CD8-positive, alpha-beta T cell (primary cell): ENCODE measurements at regions of chr12 and their contacts with region 1.

Region 1: DNA sequence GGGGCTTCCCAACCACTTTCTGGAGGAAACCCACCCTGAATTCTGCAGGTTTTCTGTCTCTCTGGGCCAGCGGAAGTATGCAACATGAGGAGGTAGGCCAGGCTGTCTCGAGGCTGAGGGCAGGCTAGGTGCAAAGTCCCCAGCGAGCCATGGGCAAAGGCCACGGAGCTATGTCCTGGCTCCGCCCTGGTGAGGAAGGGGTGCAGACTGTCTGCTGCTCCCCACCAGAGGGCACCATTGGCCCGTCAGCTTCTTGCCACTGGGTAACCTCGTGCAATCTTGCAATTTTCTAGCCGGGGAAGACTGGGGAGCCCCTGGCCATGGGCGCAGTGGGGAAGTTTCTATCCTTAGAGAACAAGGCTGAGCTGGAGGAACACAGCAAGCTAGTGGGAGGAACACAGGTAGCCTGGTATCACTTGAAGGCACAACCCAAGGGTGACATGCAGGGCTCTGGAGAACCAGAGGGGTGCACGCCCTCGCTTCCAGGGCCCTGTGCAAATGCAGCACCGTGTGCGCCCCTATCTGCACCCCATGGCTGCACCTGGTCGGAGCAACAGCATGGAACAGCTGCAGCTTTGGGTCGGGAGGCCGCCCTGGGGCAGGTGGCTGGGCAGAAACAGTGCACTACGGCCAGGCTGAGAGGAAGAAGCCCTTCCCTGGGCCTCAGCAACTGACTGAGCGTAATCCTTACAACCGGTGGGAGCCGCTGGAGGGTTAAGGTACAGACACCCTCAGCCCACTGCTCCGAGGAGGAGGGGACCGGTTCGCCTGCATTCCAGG is 27.6 kb upstream of the RPLP0 start:
- DNase-seq: peak; percentile 73 to 92 (median 89)
- ATAC-seq: peak; percentile 73
- H3K4me3 ChIP-seq: peak overlapping the region; percentile 1 to 30
- H3K4me3 Mint-ChIP-seq: peak overlapping the region; percentile 47
- H3K27ac ChIP-seq: peak overlapping the region in 1 of 2 experiments; percentile 75
- H3K27ac Mint-ChIP-seq: peak overlapping the region; percentile 88
- H3K4me1 ChIP-seq: peaks cover 81% of the 10 kb centered on the region
- H3K4me1 Mint-ChIP-seq: peaks cover 82% of the 10 kb centered on the region
- H3K27me3 ChIP-seq: no peaks in the 10 kb centered on the region
- H3K27me3 Mint-ChIP-seq: no peaks in the 10 kb centered on the region
- CTCF ChIP-seq: peak; percentile 80

Region 2: DNA sequence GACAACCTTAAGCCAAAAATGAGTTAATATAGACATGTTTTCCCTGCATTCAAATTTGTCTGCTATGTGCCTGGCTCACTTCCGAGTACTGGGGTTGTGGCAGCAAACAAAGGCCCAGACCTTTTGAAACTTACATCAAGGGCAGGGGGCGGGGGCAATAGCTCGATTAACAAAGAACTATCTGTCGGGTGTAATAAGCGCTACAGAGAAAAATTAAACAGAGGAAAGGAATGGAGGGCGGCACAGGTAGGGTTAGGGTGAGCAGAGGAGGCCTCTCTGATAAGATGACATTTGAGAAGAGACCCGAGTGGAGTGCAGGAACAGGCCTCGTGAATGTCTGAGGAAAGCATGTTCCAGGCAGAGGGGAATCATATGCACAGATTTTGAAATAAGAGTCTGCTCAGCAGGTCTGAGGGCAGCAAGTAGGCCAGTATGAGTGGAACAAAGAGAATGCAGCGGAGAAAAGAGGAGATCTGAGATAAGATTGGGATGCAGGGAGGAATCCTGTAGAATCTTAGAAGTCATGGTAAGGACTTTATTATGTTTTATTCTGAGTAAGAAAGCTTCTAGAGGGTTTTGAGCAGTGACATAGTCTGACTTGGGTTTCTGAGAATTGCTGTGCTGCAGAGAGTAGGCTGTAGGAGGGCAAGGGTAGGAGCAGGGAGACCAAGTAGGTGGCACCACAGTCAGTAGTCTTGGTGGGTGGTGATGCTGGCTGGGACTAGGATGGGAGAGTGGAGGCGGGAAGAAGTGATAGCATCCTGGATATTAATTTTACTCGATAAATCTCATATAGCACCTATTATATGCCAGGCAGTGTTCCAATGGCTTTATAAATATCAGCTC is 186.9 kb before region 1 on chr12:
- CTCF ChIA-PET with region 1: no interaction called
- POLR2A ChIA-PET with region 1: no interaction called
- intact Hi-C with region 1: no loop called
- DNase-seq: peak in 8 of 9 experiments; percentile 4 to 72 (median 42)
- ATAC-seq: peak; percentile 87
- H3K4me3 ChIP-seq: no peak overlapping the region
- H3K4me3 Mint-ChIP-seq: peak overlapping the region; percentile 30
- H3K27ac ChIP-seq: peak overlapping the region in 1 of 2 experiments; percentile 4
- H3K27ac Mint-ChIP-seq: peak overlapping the region; percentile 93
- H3K4me1 ChIP-seq: no peaks in the 10 kb centered on the region
- H3K4me1 Mint-ChIP-seq: peaks cover 26% of the 10 kb centered on the region
- H3K27me3 ChIP-seq: no peaks in the 10 kb centered on the region
- H3K27me3 Mint-ChIP-seq: no peaks in the 10 kb centered on the region
- CTCF ChIP-seq: no peak

Region 3: GRCh38 chr12:120200364-120200800 is 28.1 kb before region 1 on chr12:
- CTCF ChIA-PET with region 1: interaction called, 26 read pairs
- POLR2A ChIA-PET with region 1: interaction called, 21 read pairs
- intact Hi-C with region 1: loop called in 1 of 2 experiments (anchors 1 kb)
- DNase-seq: no peak
- ATAC-seq: no peak
- H3K4me3 ChIP-seq: peak overlapping the region; percentile 89 to 91
- H3K4me3 Mint-ChIP-seq: peak overlapping the region; percentile 93
- H3K27ac ChIP-seq: peak overlapping the region; percentile 70 to 83
- H3K27ac Mint-ChIP-seq: peak overlapping the region; percentile 96
- H3K4me1 ChIP-seq: peaks cover 36% of the 10 kb centered on the region
- H3K4me1 Mint-ChIP-seq: peaks cover 32% of the 10 kb centered on the region
- H3K27me3 ChIP-seq: no peaks in the 10 kb centered on the region
- H3K27me3 Mint-ChIP-seq: no peaks in the 10 kb centered on the region
- CTCF ChIP-seq: no peak

Region 4: DNA sequence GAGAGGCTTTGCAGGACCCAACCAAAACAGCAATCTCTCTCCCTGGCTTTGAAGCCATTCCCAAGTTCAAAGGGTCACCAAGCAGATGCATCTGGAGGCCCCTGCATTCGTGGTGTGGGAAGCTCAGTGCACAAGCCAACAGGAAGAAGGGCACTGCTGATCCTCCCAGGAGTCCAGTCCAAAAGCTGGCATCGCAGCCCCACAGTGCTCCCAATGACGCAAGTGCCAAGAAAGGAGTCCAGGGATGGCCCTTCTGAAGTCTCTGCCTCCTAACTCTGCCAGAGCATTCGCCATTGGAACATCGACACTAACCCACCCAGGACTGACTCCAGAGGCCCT is 12.0 kb after region 1 on chr12:
- CTCF ChIA-PET with region 1: interaction called, 193 read pairs
- POLR2A ChIA-PET with region 1: interaction called, 12 read pairs
- intact Hi-C with region 1: no loop called
- DNase-seq: no peak
- ATAC-seq: no peak
- H3K4me3 ChIP-seq: no peak overlapping the region
- H3K4me3 Mint-ChIP-seq: no peak overlapping the region
- H3K27ac ChIP-seq: no peak overlapping the region
- H3K27ac Mint-ChIP-seq: no peak overlapping the region
- H3K4me1 ChIP-seq: peaks cover 64% of the 10 kb centered on the region
- H3K4me1 Mint-ChIP-seq: peaks cover 72% of the 10 kb centered on the region
- H3K27me3 ChIP-seq: no peaks in the 10 kb centered on the region
- H3K27me3 Mint-ChIP-seq: no peaks in the 10 kb centered on the region
- CTCF ChIP-seq: no peak

Region 5: DNA sequence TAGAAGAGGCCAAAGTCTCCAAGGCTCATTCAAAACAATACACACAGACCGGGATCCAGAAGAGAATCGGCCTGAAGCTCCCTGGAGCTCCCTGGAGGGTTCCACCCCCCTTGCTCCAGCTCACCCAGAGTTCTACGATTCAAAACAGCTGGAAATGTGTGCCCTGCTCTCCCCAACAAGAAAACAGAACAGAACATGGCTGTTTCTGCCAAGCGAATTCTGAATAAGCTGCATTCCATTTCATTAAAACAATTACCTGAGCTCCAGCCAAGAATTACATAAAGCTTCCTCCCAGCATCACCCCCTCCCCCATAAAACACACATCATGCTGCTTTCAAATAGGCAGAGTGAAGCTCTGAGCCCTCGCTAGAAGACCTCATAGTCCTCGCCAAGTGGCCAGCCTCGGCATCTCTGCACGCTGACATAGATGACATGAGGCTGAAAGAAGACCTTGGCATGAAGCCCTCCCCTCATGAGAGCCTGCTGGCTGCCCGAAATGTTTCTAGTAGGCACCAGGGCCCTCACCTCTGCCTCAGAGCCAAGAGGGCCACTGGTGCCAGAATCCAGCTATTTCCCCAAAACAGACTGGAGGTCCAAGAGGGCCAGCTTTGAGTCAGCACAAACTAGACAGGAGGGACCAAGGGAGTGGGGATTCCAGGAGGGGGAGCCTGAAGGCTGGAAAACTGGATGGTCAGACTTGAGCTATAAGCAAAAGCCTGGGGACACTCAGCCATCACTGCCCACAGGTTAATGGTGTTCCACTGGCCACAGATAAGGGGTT is 28.8 kb after region 1 on chr12:
- CTCF ChIA-PET with region 1: interaction called, 458 read pairs
- POLR2A ChIA-PET with region 1: interaction called, 150 read pairs
- intact Hi-C with region 1: loop called (anchors 1 kb)
- DNase-seq: no peak
- ATAC-seq: no peak
- H3K4me3 ChIP-seq: no peak overlapping the region
- H3K4me3 Mint-ChIP-seq: no peak overlapping the region
- H3K27ac ChIP-seq: peak overlapping the region in 1 of 2 experiments; percentile 23
- H3K27ac Mint-ChIP-seq: peak overlapping the region; percentile 83
- H3K4me1 ChIP-seq: peaks cover 89% of the 10 kb centered on the region
- H3K4me1 Mint-ChIP-seq: peaks cover 88% of the 10 kb centered on the region
- H3K27me3 ChIP-seq: no peaks in the 10 kb centered on the region
- H3K27me3 Mint-ChIP-seq: no peaks in the 10 kb centered on the region
- CTCF ChIP-seq: no peak

Region 6: DNA sequence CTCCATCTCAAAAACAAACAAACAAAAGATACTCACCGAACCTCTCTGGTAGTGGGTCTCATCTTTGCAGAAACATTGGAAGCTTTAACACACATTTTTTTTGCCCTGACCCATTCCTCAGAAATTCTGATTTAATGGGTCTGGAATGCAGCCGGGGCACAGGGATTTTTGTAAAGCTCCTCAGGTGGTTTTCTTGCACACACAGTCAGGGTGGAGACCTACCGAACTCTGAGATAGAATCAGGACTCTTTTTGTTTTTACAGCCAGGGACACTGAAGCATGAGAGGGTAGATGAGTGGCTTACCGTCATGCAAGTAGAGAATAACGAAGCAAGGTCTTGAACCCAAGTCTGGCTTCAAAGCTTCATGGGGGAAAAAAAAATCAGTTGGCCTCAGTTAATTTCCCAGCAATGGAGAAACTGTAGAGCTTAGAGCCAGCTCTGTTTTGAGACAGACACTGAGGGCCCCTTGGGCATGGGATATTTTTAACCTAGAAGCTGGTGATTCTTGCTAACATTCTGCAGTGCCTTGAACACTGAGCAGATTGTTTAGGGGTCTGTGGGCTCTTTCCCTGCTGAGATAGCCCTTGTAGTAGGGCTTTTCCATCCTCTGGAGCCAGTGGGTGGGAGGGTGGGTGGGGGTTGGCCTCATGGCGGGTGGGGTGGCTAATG is 58.5 kb after region 1 on chr12:
- CTCF ChIA-PET with region 1: interaction called, 46 read pairs
- POLR2A ChIA-PET with region 1: interaction called, 106 read pairs
- intact Hi-C with region 1: loop called in 1 of 2 experiments (anchors 1 kb)
- DNase-seq: no peak
- ATAC-seq: no peak
- H3K4me3 ChIP-seq: no peak overlapping the region
- H3K4me3 Mint-ChIP-seq: no peak overlapping the region
- H3K27ac ChIP-seq: no peak overlapping the region
- H3K27ac Mint-ChIP-seq: no peak overlapping the region
- H3K4me1 ChIP-seq: peaks cover 10% of the 10 kb centered on the region
- H3K4me1 Mint-ChIP-seq: peaks cover 8% of the 10 kb centered on the region
- H3K27me3 ChIP-seq: no peaks in the 10 kb centered on the region
- H3K27me3 Mint-ChIP-seq: no peaks in the 10 kb centered on the region
- CTCF ChIP-seq: no peak

Region 7: DNA sequence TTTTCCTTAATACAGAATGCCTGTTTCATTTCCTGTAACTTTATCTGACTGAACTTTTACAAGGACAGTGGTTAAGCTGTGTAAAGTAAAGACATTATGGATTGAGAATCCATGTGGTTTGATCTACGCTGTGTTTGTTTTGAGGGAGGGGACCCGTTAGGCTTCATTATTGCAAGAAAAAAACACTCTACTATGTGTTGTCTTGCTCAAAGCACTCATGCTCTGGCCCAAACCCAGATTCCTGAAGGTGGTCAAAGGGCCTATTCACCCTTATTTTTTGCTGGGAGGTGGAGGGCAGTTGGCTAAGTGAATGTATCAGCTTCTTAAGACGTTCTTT is 317.5 kb after region 1 on chr12:
- CTCF ChIA-PET with region 1: no interaction called
- POLR2A ChIA-PET with region 1: no interaction called
- intact Hi-C with region 1: no loop called
- DNase-seq: no peak
- ATAC-seq: no peak
- H3K4me3 ChIP-seq: no peak overlapping the region
- H3K4me3 Mint-ChIP-seq: no peak overlapping the region
- H3K27ac ChIP-seq: no peak overlapping the region
- H3K27ac Mint-ChIP-seq: no peak overlapping the region
- H3K4me1 ChIP-seq: peaks cover 10% of the 10 kb centered on the region
- H3K4me1 Mint-ChIP-seq: peaks cover 29% of the 10 kb centered on the region
- H3K27me3 ChIP-seq: no peaks in the 10 kb centered on the region
- H3K27me3 Mint-ChIP-seq: no peaks in the 10 kb centered on the region
- CTCF ChIP-seq: no peak